ENCODE measurements at regions of chr3 and their contacts with region 1.

Region 1: GRCh38 chr3:193780810-193781472 is 187.9 kb downstream of the OPA1 start:
- DNase-seq: peak; percentile 89 to 96
- H3K4me3 ChIP-seq: no peak overlapping the region
- H3K27ac ChIP-seq: peak overlapping the region; percentile 98
- H3K4me1 ChIP-seq: peaks cover 59% of the 10 kb centered on the region
- H3K27me3 ChIP-seq: no peaks in the 10 kb centered on the region
- CTCF ChIP-seq: peak; percentile 99

Region 2: DNA sequence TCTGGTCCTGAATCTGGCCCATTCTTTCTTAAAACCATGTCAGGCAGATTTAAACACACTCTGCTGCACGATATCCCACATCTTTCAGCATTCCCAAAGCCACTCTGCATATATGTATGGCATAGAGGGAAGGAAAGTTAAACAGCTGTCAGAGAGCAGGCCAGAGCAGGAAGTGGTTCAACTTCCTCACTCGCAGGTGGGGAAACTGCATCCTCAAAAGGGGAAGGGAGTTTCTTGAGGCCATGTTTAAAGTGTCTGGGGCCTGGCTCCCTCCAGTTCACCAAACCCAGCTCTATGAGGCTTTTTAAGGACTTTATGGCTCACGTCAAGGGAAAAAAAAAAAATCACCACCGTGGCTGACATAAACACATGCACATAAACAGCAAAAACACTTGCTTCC is 64.8 kb before region 1 on chr3:
- CTCF ChIA-PET with region 1: no interaction called
- POLR2A ChIA-PET with region 1: no interaction called
- intact Hi-C with region 1: no loop called
- DNase-seq: no peak
- H3K4me3 ChIP-seq: no peak overlapping the region
- H3K27ac ChIP-seq: no peak overlapping the region
- H3K4me1 ChIP-seq: no peaks in the 10 kb centered on the region
- H3K27me3 ChIP-seq: no peaks in the 10 kb centered on the region
- CTCF ChIP-seq: no peak

Region 3: GRCh38 chr3:193831495-193832455 is 50.8 kb after region 1 on chr3:
- CTCF ChIA-PET with region 1: interaction called, 7 read pairs
- POLR2A ChIA-PET with region 1: interaction called, 10 read pairs
- intact Hi-C with region 1: loop called (anchors 1 kb)
- DNase-seq: peak; percentile 87 to 97
- H3K4me3 ChIP-seq: no peak overlapping the region
- H3K27ac ChIP-seq: peak overlapping the region; percentile 96
- H3K4me1 ChIP-seq: peaks cover 89% of the 10 kb centered on the region
- H3K27me3 ChIP-seq: no peaks in the 10 kb centered on the region
- CTCF ChIP-seq: no peak

Region 4: DNA sequence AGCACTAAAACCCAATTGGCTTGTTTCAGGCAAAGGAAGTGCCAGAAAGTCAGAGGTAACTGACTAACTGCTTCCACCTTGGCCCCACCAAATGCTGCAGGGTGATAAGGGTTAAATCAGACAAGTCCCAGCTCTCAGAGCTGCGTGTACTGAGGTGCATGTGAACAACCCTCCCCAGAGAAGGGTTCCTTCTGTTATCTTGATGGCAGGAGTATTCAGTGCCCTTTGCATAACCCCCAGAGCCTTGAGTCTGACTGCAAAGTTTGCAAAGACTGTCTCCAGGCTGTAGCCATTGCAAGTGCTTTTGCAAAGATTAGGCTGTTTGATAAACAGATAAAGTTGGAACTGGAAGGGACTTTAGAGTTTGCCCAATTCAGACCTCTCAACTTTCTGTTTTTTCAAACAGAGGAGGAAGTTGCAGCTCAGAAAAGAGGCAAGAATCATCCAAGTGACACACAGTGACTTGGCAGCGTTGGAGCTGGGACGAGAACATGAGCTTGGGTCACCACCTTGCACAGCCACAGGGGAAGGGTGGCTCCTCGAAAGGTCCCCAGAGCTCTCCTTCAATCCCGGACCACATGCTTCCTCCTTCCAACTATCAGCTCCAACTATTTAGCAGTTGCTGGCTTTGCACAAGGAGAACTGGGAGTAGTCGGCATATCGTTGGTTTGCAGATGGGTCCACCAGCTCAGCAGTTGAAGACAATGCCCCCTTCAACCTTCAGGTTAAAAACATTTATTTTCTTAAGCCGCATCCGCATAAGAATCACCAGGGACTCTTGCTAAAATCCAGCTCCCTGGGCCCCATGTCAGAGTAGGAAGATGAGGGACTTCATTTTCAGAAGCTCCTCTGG is 130.2 kb after region 1 on chr3:
- CTCF ChIA-PET with region 1: no interaction called
- POLR2A ChIA-PET with region 1: no interaction called
- intact Hi-C with region 1: loop called (anchors 1 kb)
- DNase-seq: peak; percentile 63 to 94
- H3K4me3 ChIP-seq: no peak overlapping the region
- H3K27ac ChIP-seq: peak overlapping the region; percentile 69
- H3K4me1 ChIP-seq: peaks cover 26% of the 10 kb centered on the region
- H3K27me3 ChIP-seq: no peaks in the 10 kb centered on the region
- CTCF ChIP-seq: no peak

Region 5: DNA sequence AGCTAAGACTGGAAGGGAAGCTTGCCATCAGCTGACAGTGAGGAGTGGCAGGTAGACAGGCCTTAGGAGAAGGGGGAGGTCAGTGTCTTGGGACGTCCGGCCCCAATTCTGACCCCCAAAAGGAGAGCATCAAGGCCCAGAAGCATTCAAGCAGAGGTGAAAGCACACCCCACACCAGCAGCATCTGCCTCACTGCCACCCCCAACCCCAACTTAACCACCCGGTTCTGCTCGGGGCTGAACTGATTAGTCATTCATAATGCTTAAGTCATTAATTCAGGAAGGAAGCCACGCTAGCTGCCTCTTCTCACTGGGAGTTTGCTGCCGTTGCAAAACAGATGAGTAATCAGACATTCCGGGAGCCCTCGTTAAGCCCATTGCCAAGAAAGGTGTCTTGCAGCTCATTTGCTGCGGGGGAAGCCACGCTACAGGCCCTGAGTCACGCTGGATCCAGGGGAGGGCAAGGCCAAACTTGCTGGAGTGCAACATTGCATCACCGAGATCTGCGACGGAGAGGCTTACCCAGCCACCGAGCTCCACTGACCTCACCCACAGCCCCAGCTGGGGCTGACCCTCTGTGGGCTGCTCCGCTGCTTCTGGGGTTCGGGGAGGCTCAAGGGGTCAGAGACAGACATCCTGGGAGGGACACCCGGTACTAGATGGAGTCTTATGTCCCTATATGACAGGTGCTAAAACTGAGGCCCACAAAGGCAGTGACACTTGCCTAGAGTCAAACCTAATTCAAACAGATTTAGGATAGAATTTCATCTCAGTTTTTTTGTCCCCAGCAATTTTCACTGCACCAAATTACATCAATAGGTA is 308.6 kb after region 1 on chr3:
- CTCF ChIA-PET with region 1: no interaction called
- POLR2A ChIA-PET with region 1: no interaction called
- intact Hi-C with region 1: loop called (anchors 1 kb)
- DNase-seq: peak; percentile 98 to 100
- H3K4me3 ChIP-seq: peak overlapping the region; percentile 16; the same call in 1 of the 2 replicates
- H3K27ac ChIP-seq: peak overlapping the region; percentile 98
- H3K4me1 ChIP-seq: peaks cover 48% of the 10 kb centered on the region
- H3K27me3 ChIP-seq: no peaks in the 10 kb centered on the region
- CTCF ChIP-seq: no peak

Region 6: GRCh38 chr3:194212845-194213320 is 431.9 kb after region 1 on chr3:
- CTCF ChIA-PET with region 1: no interaction called
- POLR2A ChIA-PET with region 1: no interaction called
- intact Hi-C with region 1: loop called (anchors 2 kb)
- DNase-seq: peak; percentile 93 to 97
- H3K4me3 ChIP-seq: no peak overlapping the region
- H3K27ac ChIP-seq: peak overlapping the region; percentile 49
- H3K4me1 ChIP-seq: peaks cover 27% of the 10 kb centered on the region
- H3K27me3 ChIP-seq: no peaks in the 10 kb centered on the region
- CTCF ChIP-seq: no peak

Region 7: DNA sequence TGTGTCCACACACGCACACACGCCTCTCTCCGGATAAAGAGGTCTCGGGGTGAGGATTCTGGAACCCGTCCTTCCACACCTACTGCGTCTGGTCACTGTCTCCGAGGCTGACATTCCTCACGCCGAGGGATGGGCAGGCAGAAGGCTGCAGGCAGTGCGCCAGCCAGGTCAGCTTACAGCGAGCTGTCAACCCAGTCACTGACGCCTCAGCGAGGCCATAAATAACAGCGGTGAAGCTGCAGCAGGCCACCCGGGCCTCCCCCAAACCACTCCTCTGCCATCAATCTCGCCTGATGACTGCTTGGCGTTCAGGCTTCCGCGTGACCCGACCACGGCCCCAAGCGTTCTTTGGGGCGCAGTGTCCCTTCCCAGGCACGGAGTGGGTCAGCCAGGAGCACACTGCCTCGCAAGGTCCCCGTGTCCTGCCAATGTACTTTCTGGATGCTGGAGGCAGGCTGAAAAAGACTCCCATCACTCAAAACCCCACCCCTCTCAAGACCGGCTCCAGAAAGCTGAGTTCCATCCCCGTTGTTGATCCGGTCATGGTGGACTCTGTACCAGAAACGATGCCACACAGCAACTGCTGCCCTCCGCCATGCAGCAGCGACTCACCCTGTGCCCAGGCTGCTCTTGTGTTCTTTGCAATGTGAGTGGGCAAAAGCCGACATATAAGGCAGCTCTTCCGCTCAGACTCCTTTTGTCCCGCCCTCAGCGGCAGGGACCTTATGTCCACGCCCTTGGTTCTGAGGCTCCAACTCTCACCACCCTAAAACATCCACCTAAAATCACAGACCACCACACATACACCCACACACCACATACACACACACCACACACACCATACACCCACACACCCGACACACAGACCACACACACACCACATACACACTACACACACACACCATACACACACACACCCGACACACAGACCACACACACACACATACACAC is 543.1 kb after region 1 on chr3:
- CTCF ChIA-PET with region 1: interaction called, 3 read pairs
- POLR2A ChIA-PET with region 1: interaction called, 5 read pairs
- intact Hi-C with region 1: loop called (anchors 1 kb)
- DNase-seq: peak; percentile 60 to 72
- H3K4me3 ChIP-seq: no peak overlapping the region
- H3K27ac ChIP-seq: peak overlapping the region; percentile 98
- H3K4me1 ChIP-seq: peaks cover 39% of the 10 kb centered on the region
- H3K27me3 ChIP-seq: no peaks in the 10 kb centered on the region
- CTCF ChIP-seq: no peak